ENCODE measurements at regions of chr13 and their contacts with region 1.

Region 1: GRCh38 chr13:100235311-100235901 is 146.5 kb downstream of the PCCA start:
- DNase-seq: peak; percentile 60
- ATAC-seq: no peak
- H3K4me3 ChIP-seq: peak overlapping the region in 1 of 3 experiments; percentile 2; a peak in 1 of 6 replicates
- H3K27ac ChIP-seq: no peak overlapping the region
- H3K4me1 ChIP-seq: peaks cover 53% of the 10 kb centered on the region
- H3K27me3 ChIP-seq: no peaks in the 10 kb centered on the region; a peak in 1 of 5 replicates
- CTCF ChIP-seq: peak; percentile 67
- EP300 ChIP-seq: no peak
- POLR2A ChIP-seq: no peak
- RAD21 ChIP-seq: peak; percentile 73

Region 2: DNA sequence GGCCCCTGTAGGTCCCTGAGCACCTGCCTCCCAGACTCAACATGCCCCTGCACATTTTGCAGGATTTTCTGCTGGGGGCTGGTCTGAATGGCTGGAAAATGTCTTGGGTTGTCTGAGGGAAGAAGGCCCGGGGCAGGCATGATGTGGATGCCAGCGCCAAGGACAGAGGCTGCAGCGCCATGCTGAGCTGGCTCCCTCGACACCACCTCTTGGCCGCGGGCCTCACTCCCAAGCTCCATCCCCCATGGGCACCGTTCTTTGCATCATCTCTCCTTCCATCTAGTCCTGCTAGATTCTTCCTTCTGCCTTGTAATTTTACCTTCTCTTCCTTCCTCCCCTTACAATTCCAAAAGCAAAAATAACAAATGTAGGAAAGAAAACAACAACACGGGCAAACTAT is 334.4 kb before region 1 on chr13:
- CTCF ChIA-PET with region 1: interaction called, 5 read pairs
- POLR2A ChIA-PET with region 1: no interaction called
- in situ Hi-C with region 1: loop called (anchors 5 kb)
- intact Hi-C with region 1: no loop called
- DNase-seq: no peak
- ATAC-seq: peak; percentile 20
- H3K4me3 ChIP-seq: no peak overlapping the region
- H3K27ac ChIP-seq: no peak overlapping the region
- H3K4me1 ChIP-seq: peaks cover 34% of the 10 kb centered on the region
- H3K27me3 ChIP-seq: peaks cover 0 to 1% of the 10 kb centered on the region in 2 experiments; a peak in 1 of 5 replicates
- CTCF ChIP-seq: no peak
- EP300 ChIP-seq: no peak
- POLR2A ChIP-seq: no peak
- RAD21 ChIP-seq: no peak

Region 3: DNA sequence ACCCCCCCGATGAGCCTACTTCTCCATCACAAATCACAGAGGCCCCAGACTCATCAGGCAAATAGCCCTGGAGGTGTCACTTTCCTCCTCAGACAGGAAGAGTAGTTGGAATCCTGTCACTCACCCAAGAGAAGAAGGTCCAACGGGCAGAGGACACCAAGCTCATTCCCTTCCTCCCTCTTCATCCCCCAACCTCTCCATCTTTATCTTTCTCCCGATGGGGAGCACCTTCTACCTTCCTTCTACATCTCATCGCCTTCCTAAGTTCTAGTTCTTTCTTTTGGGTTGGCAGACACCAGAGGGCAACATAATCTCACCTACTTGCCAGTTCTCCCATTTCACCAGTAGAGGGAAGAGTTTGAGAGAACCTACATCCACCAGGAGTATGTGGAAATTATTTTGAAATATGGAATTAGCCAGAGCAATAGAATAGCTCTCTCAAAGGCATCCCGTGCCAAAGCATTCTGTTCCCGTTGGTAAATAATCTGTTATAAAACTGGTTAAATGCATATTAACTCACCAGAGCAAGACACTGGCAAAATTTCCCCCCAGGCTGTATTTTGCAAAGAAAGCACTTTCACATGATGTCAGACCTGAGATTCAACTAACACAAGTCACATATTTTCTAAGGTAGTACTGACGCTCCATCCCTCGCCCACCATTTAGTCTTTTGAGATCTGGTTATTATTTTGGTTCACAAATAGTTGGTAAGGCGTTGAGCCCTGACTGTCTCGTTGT is 318.9 kb before region 1 on chr13:
- CTCF ChIA-PET with region 1: interaction called, 35 read pairs
- POLR2A ChIA-PET with region 1: no interaction called
- in situ Hi-C with region 1: no loop called
- intact Hi-C with region 1: loop called (anchors 1 kb)
- DNase-seq: peak; percentile 76
- ATAC-seq: peak; percentile 93
- H3K4me3 ChIP-seq: no peak overlapping the region
- H3K27ac ChIP-seq: no peak overlapping the region
- H3K4me1 ChIP-seq: peaks cover 14% of the 10 kb centered on the region
- H3K27me3 ChIP-seq: peaks cover 0 to 12% of the 10 kb centered on the region in 2 experiments; a peak in 4 of 5 replicates
- CTCF ChIP-seq: peak; percentile 90
- EP300 ChIP-seq: 0 out of 4 replicates have a peak, but pooled peaks of 1 of the 2 experiments have one; percentile 15
- POLR2A ChIP-seq: no peak
- RAD21 ChIP-seq: peak; percentile 79; the same call in 1 of the 2 replicates

Region 4: GRCh38 chr13:99969919-99970621 is 265.3 kb before region 1 on chr13:
- CTCF ChIA-PET with region 1: no interaction called
- POLR2A ChIA-PET with region 1: no interaction called
- in situ Hi-C with region 1: no loop called
- intact Hi-C with region 1: loop called (anchors 10 kb)
- DNase-seq: peak; percentile 57
- ATAC-seq: peak; percentile 73
- H3K4me3 ChIP-seq: peak overlapping the region; percentile 42 to 66 (median 50); a peak in 4 of 6 replicates
- H3K27ac ChIP-seq: no peak overlapping the region
- H3K4me1 ChIP-seq: peaks cover 7% of the 10 kb centered on the region; the same call in 1 of the 2 replicates
- H3K27me3 ChIP-seq: peaks cover 9 to 30% of the 10 kb centered on the region in 2 experiments
- CTCF ChIP-seq: 0 out of 2 replicates have a peak, but pooled peaks have one; percentile 4
- EP300 ChIP-seq: no peak
- POLR2A ChIP-seq: no peak
- RAD21 ChIP-seq: no peak

Region 5: GRCh38 chr13:99980201-99980823 is 255.1 kb before region 1 on chr13:
- CTCF ChIA-PET with region 1: no interaction called
- POLR2A ChIA-PET with region 1: no interaction called
- in situ Hi-C with region 1: loop called (anchors 10 kb)
- intact Hi-C with region 1: loop called (anchors 10 kb)
- DNase-seq: no peak
- ATAC-seq: peak; percentile 74
- H3K4me3 ChIP-seq: peak overlapping the region; percentile 37 to 73 (median 48); a peak in 4 of 6 replicates
- H3K27ac ChIP-seq: no peak overlapping the region
- H3K4me1 ChIP-seq: peaks cover 38% of the 10 kb centered on the region
- H3K27me3 ChIP-seq: peaks cover 9 to 75% of the 10 kb centered on the region in 2 experiments; a peak in 4 of 5 replicates
- CTCF ChIP-seq: peak; percentile 53
- EP300 ChIP-seq: no peak
- POLR2A ChIP-seq: no peak
- RAD21 ChIP-seq: peak; percentile 66

Region 6: GRCh38 chr13:100088644-100089464 is 146.6 kb before region 1 on chr13 and contains the start of gene PCCA:
- CTCF ChIA-PET with region 1: no interaction called
- POLR2A ChIA-PET with region 1: no interaction called
- in situ Hi-C with region 1: no loop called
- intact Hi-C with region 1: loop called (anchors 10 kb)
- DNase-seq: peak; percentile 93
- ATAC-seq: peak; percentile 96
- H3K4me3 ChIP-seq: peak within 1 kb of the TSS; percentile 88 to 93 (median 93)
- H3K27ac ChIP-seq: peak within 1 kb of the TSS; percentile 73
- H3K4me1 ChIP-seq: peaks cover 46% of the 10 kb centered on the region
- H3K27me3 ChIP-seq: no peaks in the 10 kb centered on the region; a peak in 1 of 5 replicates
- CTCF ChIP-seq: peak; percentile 36
- EP300 ChIP-seq: peak in 1 of 2 experiments; percentile 38; a peak in 2 of 4 replicates
- POLR2A ChIP-seq: peak; percentile 71 to 85
- RAD21 ChIP-seq: peak; percentile 15
- total RNA-seq, gene PCCA: 32.2 and 34.6 TPM in 2 replicates

Region 7: DNA sequence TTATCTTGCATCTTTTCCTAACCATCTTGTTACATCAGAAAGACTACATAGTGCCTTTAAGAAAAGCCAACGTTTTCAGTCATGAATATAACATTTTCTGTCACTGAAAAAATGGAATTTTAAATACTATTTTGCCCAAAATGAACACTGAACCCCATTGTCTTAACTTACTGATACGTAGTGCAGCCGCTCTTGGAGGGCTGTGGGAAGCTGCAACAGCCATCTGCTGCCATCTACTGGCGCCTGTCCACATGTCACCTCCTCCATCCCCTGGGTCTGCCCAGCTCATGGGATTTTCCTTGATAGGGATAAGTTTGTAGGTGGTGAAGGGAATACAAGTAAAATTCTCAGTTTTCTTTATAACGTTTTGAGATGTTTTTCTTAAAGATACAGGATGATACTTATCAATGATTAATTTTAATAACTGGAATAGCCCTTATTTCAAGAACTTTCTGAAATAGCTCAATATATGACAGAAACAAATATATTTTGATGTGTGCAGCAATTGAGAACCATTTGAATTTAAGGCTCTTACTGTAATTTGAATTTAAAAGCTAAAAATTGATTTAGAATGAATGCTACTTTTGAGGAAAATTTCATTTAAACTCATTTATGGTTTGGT is 279.5 kb after region 1 on chr13:
- CTCF ChIA-PET with region 1: no interaction called
- POLR2A ChIA-PET with region 1: no interaction called
- in situ Hi-C with region 1: no loop called
- intact Hi-C with region 1: loop called (anchors 2 kb)
- DNase-seq: peak; percentile 56
- ATAC-seq: peak; percentile 92
- H3K4me3 ChIP-seq: no peak overlapping the region
- H3K27ac ChIP-seq: no peak overlapping the region
- H3K4me1 ChIP-seq: peaks cover 31% of the 10 kb centered on the region
- H3K27me3 ChIP-seq: no peaks in the 10 kb centered on the region
- CTCF ChIP-seq: peak; percentile 93
- EP300 ChIP-seq: no peak
- POLR2A ChIP-seq: no peak
- RAD21 ChIP-seq: peak; percentile 84

Measured in HepG2 (cell line).